ENCODE measurements at regions of chr16 and their contacts with region 1.

Region 1: DNA sequence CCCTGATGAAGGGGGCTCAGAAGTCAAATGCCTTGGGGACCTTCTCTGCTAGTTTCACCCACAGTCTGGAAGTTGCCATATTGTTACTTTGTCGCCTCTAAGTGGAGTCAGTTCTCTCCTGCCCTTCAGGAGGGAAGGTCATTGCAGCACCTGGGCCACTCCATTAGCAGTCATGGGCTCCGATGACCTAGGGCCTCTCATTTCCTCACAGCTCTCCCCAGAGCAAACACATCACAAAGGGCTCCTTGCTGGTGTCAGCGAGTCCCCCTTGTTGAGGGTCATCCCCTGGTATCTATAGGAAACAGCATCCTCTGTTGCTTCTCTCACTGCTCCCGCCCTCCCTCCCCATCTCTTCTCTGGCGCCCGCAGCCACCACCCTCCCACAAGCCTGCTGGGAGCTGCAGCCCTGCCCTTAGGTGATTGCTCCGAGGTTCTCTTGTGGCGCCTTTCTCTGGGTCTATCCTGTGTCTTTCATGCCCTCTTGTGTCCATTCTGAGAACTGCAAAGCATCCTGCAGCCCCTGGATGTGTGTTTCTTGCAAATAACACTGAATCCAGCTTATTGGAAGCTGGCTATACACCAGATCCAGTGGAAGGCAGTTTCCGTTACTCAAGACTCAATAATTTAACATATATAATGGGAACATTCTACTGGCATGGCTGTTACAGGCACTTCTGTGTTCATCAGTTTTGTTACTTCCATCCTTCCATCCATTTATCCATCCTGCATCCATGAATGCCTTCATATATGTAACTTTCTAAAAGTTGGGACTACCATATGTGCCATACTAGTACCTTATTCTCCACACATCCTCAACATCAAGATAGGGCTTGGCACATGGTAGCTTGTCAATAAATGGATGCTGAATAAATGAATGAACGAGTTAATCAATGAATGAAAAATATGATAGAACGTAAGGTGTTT is 21.2 kb downstream of the PDILT start:
- DNase-seq: peak; percentile 46
- H3K4me3 Mint-ChIP-seq: no peak overlapping the region
- H3K27ac Mint-ChIP-seq: no peak overlapping the region
- H3K4me1 Mint-ChIP-seq: no peaks in the 10 kb centered on the region
- H3K27me3 Mint-ChIP-seq: peaks cover 5% of the 10 kb centered on the region

Region 2: GRCh38 chr16:20348365-20349185 is 34.8 kb before region 1 on chr16:
- CTCF ChIA-PET with region 1: no interaction called
- POLR2A ChIA-PET with region 1: no interaction called
- DNase-seq: no peak
- H3K4me3 Mint-ChIP-seq: no peak overlapping the region
- H3K27ac Mint-ChIP-seq: no peak overlapping the region
- H3K4me1 Mint-ChIP-seq: no peaks in the 10 kb centered on the region
- H3K27me3 Mint-ChIP-seq: no peaks in the 10 kb centered on the region

Region 3: GRCh38 chr16:20372701-20373100 is 10.7 kb before region 1 on chr16:
- CTCF ChIA-PET with region 1: interaction called, 21 read pairs
- POLR2A ChIA-PET with region 1: no interaction called
- DNase-seq: no peak
- H3K4me3 Mint-ChIP-seq: no peak overlapping the region
- H3K27ac Mint-ChIP-seq: no peak overlapping the region
- H3K4me1 Mint-ChIP-seq: no peaks in the 10 kb centered on the region
- H3K27me3 Mint-ChIP-seq: peaks cover 8% of the 10 kb centered on the region

Region 4: DNA sequence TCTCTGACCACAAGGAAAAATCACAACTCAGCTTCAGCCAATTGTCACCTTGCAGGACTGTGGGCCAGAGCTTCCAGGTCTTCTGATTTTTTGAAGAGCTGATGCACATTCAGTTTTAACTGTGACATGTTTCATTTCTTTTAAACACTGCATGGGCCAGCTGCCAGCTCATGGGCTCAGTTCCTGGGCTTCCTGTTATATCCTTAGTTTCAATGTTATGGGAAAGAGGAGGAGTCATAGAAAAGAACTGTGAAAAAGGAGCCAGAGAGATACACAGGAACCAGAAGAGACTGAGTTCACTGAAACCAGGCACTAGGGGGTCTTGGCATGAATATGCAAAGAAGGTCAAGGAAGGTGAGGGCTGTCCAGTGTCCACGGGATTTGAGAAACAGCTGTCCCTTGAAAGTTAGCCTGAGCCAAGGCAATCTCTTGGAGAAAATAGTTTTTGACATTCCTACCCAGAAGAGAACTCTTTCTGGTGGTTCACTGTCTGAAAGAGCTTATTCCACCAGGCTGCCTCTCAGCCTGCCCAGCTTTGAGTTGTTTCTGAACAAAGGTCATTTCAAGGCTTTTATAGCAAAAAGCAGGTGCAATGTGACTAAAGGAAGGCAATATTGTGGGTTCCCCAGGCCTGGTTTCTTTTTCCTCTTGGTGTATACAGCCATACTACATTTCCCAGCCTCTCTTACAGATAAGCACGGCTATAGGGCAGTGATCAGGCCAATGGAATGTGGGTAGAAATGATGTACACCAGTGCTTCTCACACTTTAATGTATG is 10.6 kb after region 1 on chr16:
- CTCF ChIA-PET with region 1: interaction called, 22 read pairs
- POLR2A ChIA-PET with region 1: no interaction called
- DNase-seq: no peak
- H3K4me3 Mint-ChIP-seq: no peak overlapping the region
- H3K27ac Mint-ChIP-seq: no peak overlapping the region
- H3K4me1 Mint-ChIP-seq: no peaks in the 10 kb centered on the region
- H3K27me3 Mint-ChIP-seq: no peaks in the 10 kb centered on the region

Measured in activated CD4-positive, alpha-beta memory T cell treated with anti-CD3 and anti-CD28 coated beads, Interleukin-2, amount 10 ng/mL, durations not matched to agents 7 days and 5 days (primary cell).